ENCODE measurements at regions of chr3 and their contacts with region 1.

Region 1: DNA sequence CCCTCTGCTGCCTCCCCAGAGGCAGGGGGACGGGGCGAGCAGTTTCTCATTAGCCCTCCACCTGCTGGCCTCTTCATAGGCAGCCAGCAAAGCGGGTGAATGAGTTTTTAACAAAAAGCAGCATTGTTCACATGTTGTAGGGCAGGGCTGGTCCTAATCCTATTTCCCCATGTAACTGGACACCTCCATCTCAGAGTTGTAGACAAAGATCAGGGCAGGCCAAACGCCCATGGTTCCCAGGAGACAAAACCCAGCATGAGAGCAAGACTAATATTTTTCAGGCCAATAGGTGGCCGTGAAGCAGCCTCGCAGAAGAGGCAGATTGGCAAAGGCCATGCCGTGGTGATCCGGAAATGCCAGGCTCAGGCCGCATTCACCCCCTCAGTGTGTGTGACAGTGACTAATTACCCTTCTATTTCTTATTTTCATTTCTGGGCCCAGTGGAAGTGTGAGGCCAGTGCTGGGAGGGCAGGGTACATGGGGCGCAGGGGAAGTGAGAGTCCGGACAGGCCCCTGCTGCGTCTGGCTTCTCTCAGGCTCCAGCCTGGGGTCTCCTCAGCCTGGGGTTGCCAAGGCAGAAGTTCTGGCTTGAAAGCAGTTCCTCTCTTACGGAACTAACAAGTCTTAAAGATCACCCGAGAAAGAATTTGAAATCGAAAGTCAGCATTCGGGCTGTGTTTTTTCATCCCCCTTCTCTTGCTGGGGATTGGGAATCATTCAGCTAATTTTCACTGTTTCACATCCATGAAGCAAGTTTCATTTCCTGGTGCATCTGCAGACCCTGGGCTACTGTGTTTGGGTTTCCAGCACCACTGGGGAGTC is 64.8 kb downstream of the BOC start:
- H3K4me3 Mint-ChIP-seq: peak overlapping the region; percentile 63
- H3K27ac Mint-ChIP-seq: peak overlapping the region; percentile 94
- H3K4me1 Mint-ChIP-seq: peaks cover 54% of the 10 kb centered on the region
- H3K27me3 Mint-ChIP-seq: no peaks in the 10 kb centered on the region

Region 2: GRCh38 chr3:113211330-113212149 is 64.6 kb before region 1 on chr3 and contains the start of gene BOC:
- intact Hi-C with region 1: loop called (anchors 5 kb)
- H3K4me3 Mint-ChIP-seq: peak within 1 kb of the TSS; percentile 77
- H3K27ac Mint-ChIP-seq: peak within 1 kb of the TSS; percentile 3
- H3K4me1 Mint-ChIP-seq: peaks cover 18% of the 10 kb centered on the region
- H3K27me3 Mint-ChIP-seq: peaks cover 74% of the 10 kb centered on the region

Region 3: GRCh38 chr3:113255100-113255853 is 20.9 kb before region 1 on chr3:
- intact Hi-C with region 1: no loop called
- H3K4me3 Mint-ChIP-seq: peak overlapping the region; percentile 15
- H3K27ac Mint-ChIP-seq: peak overlapping the region; percentile 78
- H3K4me1 Mint-ChIP-seq: peaks cover 30% of the 10 kb centered on the region
- H3K27me3 Mint-ChIP-seq: peaks cover 6% of the 10 kb centered on the region

Region 4: GRCh38 chr3:113329757-113330156 is 53.6 kb after region 1 on chr3:
- intact Hi-C with region 1: no loop called
- H3K4me3 Mint-ChIP-seq: no peak overlapping the region
- H3K27ac Mint-ChIP-seq: no peak overlapping the region
- H3K4me1 Mint-ChIP-seq: no peaks in the 10 kb centered on the region
- H3K27me3 Mint-ChIP-seq: no peaks in the 10 kb centered on the region

Measured in dendritic cell treated with granulocyte-macrophage colony-stimulating factor and Interleukin-4, amounts not matched to agents 40 ng/mL and 50 ng/mL, for 4 days (primary cell).